ENCODE measurements at regions of chr6 and their contacts with region 1.

Region 1: GRCh38 chr6:26103770-26104456 is 16.7 kb downstream of the HFE start:
- DNase-seq: peak; percentile 83
- H3K4me3 ChIP-seq: peak overlapping the region; percentile 43
- H3K27me3 ChIP-seq: no peaks in the 10 kb centered on the region
- CTCF ChIP-seq: peak; percentile 61

Region 2: GRCh38 chr6:26031595-26032339 is 72.1 kb before region 1 on chr6:
- CTCF ChIA-PET with region 1: interaction called, 8 read pairs
- POLR2A ChIA-PET with region 1: interaction called, 18 read pairs
- DNase-seq: peak; percentile 80
- H3K4me3 ChIP-seq: peak overlapping the region; percentile 45
- H3K27me3 ChIP-seq: no peaks in the 10 kb centered on the region
- CTCF ChIP-seq: peak; percentile 39; the same call in 1 of the 2 replicates

Region 3: GRCh38 chr6:26065952-26066380 is 37.9 kb before region 1 on chr6:
- CTCF ChIA-PET with region 1: interaction called, 543 read pairs
- POLR2A ChIA-PET with region 1: no interaction called
- DNase-seq: no peak
- H3K4me3 ChIP-seq: no peak overlapping the region
- H3K27me3 ChIP-seq: no peaks in the 10 kb centered on the region
- CTCF ChIP-seq: peak; percentile 89

Region 4: GRCh38 chr6:26172496-26172958 is 68.6 kb after region 1 on chr6:
- CTCF ChIA-PET with region 1: no interaction called
- POLR2A ChIA-PET with region 1: no interaction called
- DNase-seq: no peak
- H3K4me3 ChIP-seq: peak overlapping the region; percentile 46
- H3K27me3 ChIP-seq: no peaks in the 10 kb centered on the region
- CTCF ChIP-seq: no peak